ENCODE measurements at regions of chr11 and their contacts with region 1.

Region 1: GRCh38 chr11:128831174-128832120 is 35.6 kb downstream of the KCNJ1 start:
- DNase-seq: peak; percentile 75 to 89 (median 80)
- H3K4me3 ChIP-seq: peak overlapping the region; percentile 4
- H3K4me3 Mint-ChIP-seq: peak overlapping the region; percentile 69 to 89 (median 72)
- H3K27ac ChIP-seq: peak overlapping the region; percentile 57
- H3K27ac Mint-ChIP-seq: peak overlapping the region; percentile 74 to 98 (median 92)
- H3K4me1 ChIP-seq: peaks cover 13% of the 10 kb centered on the region
- H3K4me1 Mint-ChIP-seq: peaks cover 21 to 39% (median 36%) of the 10 kb centered on the region in 3 donors
- H3K27me3 ChIP-seq: no peaks in the 10 kb centered on the region
- H3K27me3 Mint-ChIP-seq: no peaks in the 10 kb centered on the region

Region 2: GRCh38 chr11:128039140-128040021 is 792.1 kb before region 1 on chr11:
- CTCF ChIA-PET with region 1: interaction called, 11 read pairs
- POLR2A ChIA-PET with region 1: interaction called, 4 read pairs
- DNase-seq: peak; percentile 55 to 90 (median 76)
- H3K4me3 ChIP-seq: peak overlapping the region; percentile 41
- H3K4me3 Mint-ChIP-seq: no peak overlapping the region
- H3K27ac ChIP-seq: peak overlapping the region; percentile 60
- H3K27ac Mint-ChIP-seq: peak overlapping the region in 3 of 8 donors; percentile 44 to 92 (median 91)
- H3K4me1 ChIP-seq: peaks cover 84% of the 10 kb centered on the region
- H3K4me1 Mint-ChIP-seq: peaks cover 26 to 55% (median 28%) of the 10 kb centered on the region in 3 donors
- H3K27me3 ChIP-seq: no peaks in the 10 kb centered on the region
- H3K27me3 Mint-ChIP-seq: no peaks in the 10 kb centered on the region

Region 3: GRCh38 chr11:128757235-128757711 is 74.2 kb before region 1 on chr11:
- CTCF ChIA-PET with region 1: interaction called, 10 read pairs
- POLR2A ChIA-PET with region 1: no interaction called
- DNase-seq: peak; percentile 44 to 83 (median 67)
- H3K4me3 ChIP-seq: no peak overlapping the region
- H3K4me3 Mint-ChIP-seq: peak overlapping the region in 6 of 7 donors; percentile 36 to 65 (median 47)
- H3K27ac ChIP-seq: no peak overlapping the region
- H3K27ac Mint-ChIP-seq: peak overlapping the region; percentile 76 to 99 (median 90)
- H3K4me1 ChIP-seq: peaks cover 66% of the 10 kb centered on the region
- H3K4me1 Mint-ChIP-seq: peaks cover 79 to 93% (median 86%) of the 10 kb centered on the region in 3 donors
- H3K27me3 ChIP-seq: no peaks in the 10 kb centered on the region
- H3K27me3 Mint-ChIP-seq: peaks cover 0 to 2% of the 10 kb centered on the region in 2 donors

Region 4: DNA sequence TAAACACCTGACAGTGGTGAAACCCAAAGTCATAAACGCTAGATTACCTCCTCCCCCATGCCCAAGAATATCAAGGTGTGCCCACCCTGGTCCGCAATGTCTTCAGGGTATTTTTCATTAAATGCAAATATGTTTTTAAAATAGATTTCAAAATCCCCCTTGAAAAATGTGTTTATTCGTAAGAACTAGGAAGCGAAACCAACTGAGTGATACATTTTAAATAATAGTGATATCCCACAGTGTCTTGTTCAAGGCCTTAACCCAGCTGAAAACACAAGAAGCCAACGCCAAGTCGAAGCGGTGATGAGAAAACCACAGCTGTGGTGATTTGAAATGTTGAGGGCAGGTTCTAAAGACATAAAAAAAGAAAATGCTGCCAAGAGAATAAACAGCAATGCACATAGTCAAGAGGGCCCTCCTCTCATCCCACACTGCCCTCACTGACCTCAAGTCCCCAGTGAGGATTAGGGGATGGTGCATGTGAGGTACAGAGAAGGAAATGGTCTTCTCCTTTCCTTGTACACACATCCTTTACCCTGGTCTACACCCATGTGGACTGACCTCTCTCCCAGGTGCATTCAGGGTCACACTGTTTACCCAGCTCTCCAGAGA is 10.1 kb after region 1 on chr11:
- CTCF ChIA-PET with region 1: interaction called, 27 read pairs
- POLR2A ChIA-PET with region 1: interaction called, 4 read pairs
- DNase-seq: no peak
- H3K4me3 ChIP-seq: no peak overlapping the region
- H3K4me3 Mint-ChIP-seq: peak overlapping the region in 6 of 7 donors; percentile 7 to 76 (median 26)
- H3K27ac ChIP-seq: no peak overlapping the region
- H3K27ac Mint-ChIP-seq: peak overlapping the region in 7 of 8 donors; percentile 1 to 88 (median 74)
- H3K4me1 ChIP-seq: peaks cover 57% of the 10 kb centered on the region
- H3K4me1 Mint-ChIP-seq: peaks cover 53 to 98% (median 97%) of the 10 kb centered on the region in 3 donors
- H3K27me3 ChIP-seq: no peaks in the 10 kb centered on the region
- H3K27me3 Mint-ChIP-seq: no peaks in the 10 kb centered on the region

Region 5: DNA sequence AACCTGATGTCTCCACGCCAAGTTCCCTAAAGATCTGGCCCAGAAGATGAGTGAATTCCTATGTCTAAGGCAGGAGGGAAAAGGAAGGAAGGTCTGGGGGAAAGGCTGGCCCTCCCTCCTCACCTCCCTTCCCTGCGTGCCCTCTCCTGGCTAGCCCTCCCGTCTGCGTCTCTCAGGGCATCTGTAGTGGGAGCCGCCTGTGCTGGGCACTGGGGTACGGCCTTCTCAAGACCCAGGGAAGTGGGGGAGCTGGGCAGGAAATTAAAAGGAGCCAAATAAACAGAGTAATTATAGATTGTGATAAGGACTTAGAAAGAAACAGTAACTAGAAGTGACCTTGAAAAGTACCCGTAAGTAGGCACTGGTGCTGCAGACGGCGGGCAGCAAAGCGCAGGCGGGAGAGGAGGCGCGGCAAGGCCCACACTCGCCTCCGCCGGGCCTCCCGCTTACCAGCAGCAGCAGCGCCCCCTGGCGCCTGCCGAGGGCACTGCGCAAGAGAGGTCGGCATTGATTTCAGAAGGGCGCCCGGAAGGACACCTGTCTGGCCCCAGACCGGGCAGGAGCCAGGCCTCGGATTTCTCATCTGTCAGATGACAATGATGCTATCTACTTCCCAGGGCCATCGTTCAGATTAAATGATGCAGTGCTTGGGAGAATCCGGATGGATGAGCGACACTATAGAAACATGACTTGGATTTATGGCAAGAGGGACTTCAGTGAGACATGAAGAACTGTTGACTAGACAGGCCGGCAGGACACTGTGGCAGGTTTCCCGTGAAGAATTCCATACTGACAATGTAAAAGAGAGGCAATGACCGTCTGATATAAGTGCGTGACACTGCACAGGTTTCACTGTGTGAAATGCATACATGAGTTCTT is 28.4 kb after region 1 on chr11:
- CTCF ChIA-PET with region 1: interaction called, 21 read pairs
- POLR2A ChIA-PET with region 1: no interaction called
- DNase-seq: peak; percentile 55 to 82 (median 66)
- H3K4me3 ChIP-seq: no peak overlapping the region
- H3K4me3 Mint-ChIP-seq: peak overlapping the region in 1 of 7 donors; percentile 33
- H3K27ac ChIP-seq: no peak overlapping the region
- H3K27ac Mint-ChIP-seq: peak overlapping the region in 1 of 8 donors; percentile 17
- H3K4me1 ChIP-seq: no peaks in the 10 kb centered on the region
- H3K4me1 Mint-ChIP-seq: peaks cover 3 to 9% (median 8%) of the 10 kb centered on the region in 3 donors
- H3K27me3 ChIP-seq: no peaks in the 10 kb centered on the region
- H3K27me3 Mint-ChIP-seq: peaks cover 4 to 7% of the 10 kb centered on the region in 2 donors

Region 6: GRCh38 chr11:128884703-128885338 is 53.4 kb after region 1 on chr11:
- CTCF ChIA-PET with region 1: no interaction called
- POLR2A ChIA-PET with region 1: no interaction called
- DNase-seq: peak in 4 of 5 donors; percentile 41 to 67 (median 59)
- H3K4me3 ChIP-seq: no peak overlapping the region
- H3K4me3 Mint-ChIP-seq: no peak overlapping the region
- H3K27ac ChIP-seq: no peak overlapping the region
- H3K27ac Mint-ChIP-seq: no peak overlapping the region
- H3K4me1 ChIP-seq: peaks cover under 1% of the 10 kb centered on the region
- H3K4me1 Mint-ChIP-seq: peaks cover 7 to 8% (median 8%) of the 10 kb centered on the region in 3 donors
- H3K27me3 ChIP-seq: peaks cover 19% of the 10 kb centered on the region
- H3K27me3 Mint-ChIP-seq: peaks cover 32 to 68% of the 10 kb centered on the region in 2 donors

Measured in CD8-positive, alpha-beta memory T cell (primary cell).